Activated CD8-positive, alpha-beta T cell treated with anti-CD3 and anti-CD28 coated beads, Interleukin-2, amount 10 ng/mL, durations not matched to agents 7 days and 5 days (primary cell): ENCODE measurements at regions of chr2 and their contacts with region 1.

Region 1: DNA sequence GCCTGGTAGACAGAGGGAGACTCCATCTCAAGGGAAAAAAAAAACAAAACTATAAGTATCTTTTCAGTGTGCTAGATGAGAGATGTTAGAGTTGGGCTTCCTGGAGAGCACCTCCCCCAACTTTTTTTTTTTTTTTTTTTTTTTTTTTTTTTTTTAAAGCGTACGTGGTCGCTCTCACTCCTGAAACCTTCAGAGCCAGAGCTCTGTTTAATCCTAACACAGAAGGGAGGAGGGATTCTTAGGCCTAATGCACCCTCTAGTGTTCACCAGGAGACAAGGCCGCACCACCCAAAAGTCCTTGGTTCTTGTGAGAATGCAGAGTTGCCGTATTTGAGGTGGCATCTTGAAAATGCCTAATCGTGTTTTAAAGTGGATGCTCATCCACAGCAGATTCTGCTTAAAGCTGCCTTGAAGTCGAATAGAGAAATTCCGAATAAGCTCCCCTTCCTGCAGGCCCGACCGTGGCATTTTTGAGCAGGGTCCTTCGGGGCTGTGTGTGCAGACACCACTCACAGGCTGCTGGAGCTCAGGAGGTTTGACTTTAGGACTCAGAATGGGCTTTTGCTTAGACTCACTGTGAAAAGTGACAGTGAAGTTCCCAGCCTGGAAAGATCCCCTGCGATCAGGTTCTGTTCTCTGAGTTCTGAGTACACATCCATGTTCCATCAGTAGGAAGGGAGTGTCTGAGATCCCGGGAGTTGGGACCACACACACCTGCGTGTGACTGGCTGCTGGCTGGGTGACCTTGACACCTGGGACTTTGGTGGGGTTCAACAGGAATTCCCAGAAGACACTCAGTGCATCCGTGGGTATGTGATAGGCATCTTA is 252.6 kb downstream of the AGAP1 start:
- DNase-seq: peak; percentile 57
- ATAC-seq: peak; percentile 61
- H3K4me3 Mint-ChIP-seq: no peak overlapping the region
- H3K27ac Mint-ChIP-seq: no peak overlapping the region
- H3K4me1 Mint-ChIP-seq: no peaks in the 10 kb centered on the region
- H3K27me3 Mint-ChIP-seq: no peaks in the 10 kb centered on the region

Region 2: GRCh38 chr2:235595422-235596010 is 151.0 kb before region 1 on chr2:
- CTCF ChIA-PET with region 1: interaction called, 21 read pairs
- POLR2A ChIA-PET with region 1: no interaction called
- DNase-seq: peak; percentile 55
- ATAC-seq: no peak
- H3K4me3 Mint-ChIP-seq: no peak overlapping the region
- H3K27ac Mint-ChIP-seq: no peak overlapping the region
- H3K4me1 Mint-ChIP-seq: no peaks in the 10 kb centered on the region
- H3K27me3 Mint-ChIP-seq: no peaks in the 10 kb centered on the region

Region 3: GRCh38 chr2:235779444-235779896 is 33.0 kb after region 1 on chr2:
- CTCF ChIA-PET with region 1: no interaction called
- POLR2A ChIA-PET with region 1: no interaction called
- DNase-seq: peak; percentile 73
- ATAC-seq: peak; percentile 74
- H3K4me3 Mint-ChIP-seq: no peak overlapping the region
- H3K27ac Mint-ChIP-seq: no peak overlapping the region
- H3K4me1 Mint-ChIP-seq: no peaks in the 10 kb centered on the region
- H3K27me3 Mint-ChIP-seq: peaks cover 3% of the 10 kb centered on the region